ENCODE measurements at regions of chr4 and their contacts with region 1.

Region 1: GRCh38 chr4:83259586-83259985 is 25.0 kb downstream of the COQ2 start:
- DNase-seq: no peak
- ATAC-seq: no peak
- H3K4me3 ChIP-seq: no peak overlapping the region
- H3K4me3 Mint-ChIP-seq: no peak overlapping the region
- H3K27ac ChIP-seq: no peak overlapping the region
- H3K27ac Mint-ChIP-seq: no peak overlapping the region
- H3K4me1 ChIP-seq: peaks cover 5% of the 10 kb centered on the region
- H3K4me1 Mint-ChIP-seq: peaks cover 6% of the 10 kb centered on the region
- H3K27me3 ChIP-seq: no peaks in the 10 kb centered on the region
- H3K27me3 Mint-ChIP-seq: no peaks in the 10 kb centered on the region
- CTCF ChIP-seq: no peak

Region 2: DNA sequence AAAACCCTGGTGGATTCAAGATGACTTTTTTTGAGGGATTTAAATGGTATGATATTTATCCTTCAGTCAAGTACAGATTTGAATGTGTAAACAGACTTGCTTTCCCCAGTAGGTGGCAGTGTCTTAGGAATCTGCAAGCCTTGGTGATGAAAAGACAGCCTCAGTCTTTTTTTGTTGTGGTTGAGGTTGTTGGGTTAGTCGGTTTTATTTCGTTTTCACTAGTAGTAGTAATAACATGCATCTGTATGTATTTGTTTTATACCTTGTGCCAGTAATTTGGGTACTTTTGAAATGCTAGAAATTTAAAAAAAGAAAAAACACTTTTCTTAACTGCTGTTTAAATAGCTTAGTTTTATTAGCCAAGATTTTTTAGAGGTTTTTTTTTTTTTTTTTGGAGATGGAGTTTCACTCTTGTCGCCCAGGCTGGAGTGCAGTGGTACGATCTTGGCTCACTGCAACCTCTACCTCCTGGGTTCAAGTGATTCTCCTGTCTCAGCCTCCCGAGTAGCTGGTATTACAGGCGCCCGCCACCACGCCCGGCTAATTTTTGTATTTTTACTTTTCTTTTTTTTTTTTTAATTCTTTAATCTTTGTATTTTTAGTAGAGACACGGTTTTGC is 185.4 kb before region 1 on chr4:
- CTCF ChIA-PET with region 1: interaction called, 22 read pairs
- POLR2A ChIA-PET with region 1: interaction called, 15 read pairs
- intact Hi-C with region 1: loop called (anchors 1 kb)
- DNase-seq: peak in 9 of 14 experiments; percentile 26 to 93 (median 59)
- ATAC-seq: peak; percentile 95
- H3K4me3 ChIP-seq: peak overlapping the region; percentile 13
- H3K4me3 Mint-ChIP-seq: peak overlapping the region; percentile 68
- H3K27ac ChIP-seq: no peak overlapping the region
- H3K27ac Mint-ChIP-seq: peak overlapping the region; percentile 69
- H3K4me1 ChIP-seq: peaks cover 8% of the 10 kb centered on the region
- H3K4me1 Mint-ChIP-seq: peaks cover 13% of the 10 kb centered on the region
- H3K27me3 ChIP-seq: no peaks in the 10 kb centered on the region
- H3K27me3 Mint-ChIP-seq: no peaks in the 10 kb centered on the region
- CTCF ChIP-seq: peak; percentile 77

Region 3: DNA sequence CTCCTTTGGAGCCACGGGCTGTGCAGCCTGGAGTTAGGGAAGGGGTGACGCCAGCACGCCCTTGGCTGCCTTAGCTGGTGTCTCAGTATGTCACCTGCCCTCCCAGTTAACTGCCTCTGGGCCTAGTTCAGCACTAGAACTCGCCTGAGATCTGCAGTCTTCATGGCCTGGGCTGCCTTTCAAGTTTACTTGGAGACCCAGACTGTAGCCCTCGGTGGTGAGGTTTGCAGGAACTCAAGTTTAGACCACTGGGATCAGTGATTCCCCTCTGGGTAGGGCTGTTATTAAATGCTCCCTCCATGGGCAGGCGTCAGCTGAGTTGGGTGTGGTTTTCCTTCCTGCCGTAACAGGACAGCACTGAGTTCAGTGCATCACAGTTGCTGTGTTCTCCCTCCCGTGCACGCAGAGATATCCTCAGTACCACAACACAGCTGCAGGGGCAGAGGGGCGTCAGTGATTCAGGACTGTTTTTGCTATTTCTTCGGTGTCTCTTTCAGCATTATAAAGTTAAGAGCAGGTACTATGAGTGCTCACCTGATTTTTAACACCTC is 175.6 kb before region 1 on chr4:
- CTCF ChIA-PET with region 1: interaction called, 11 read pairs
- POLR2A ChIA-PET with region 1: interaction called, 13 read pairs
- intact Hi-C with region 1: no loop called
- DNase-seq: peak in 12 of 14 experiments; percentile 28 to 90 (median 66)
- ATAC-seq: peak; percentile 98
- H3K4me3 ChIP-seq: no peak overlapping the region
- H3K4me3 Mint-ChIP-seq: peak overlapping the region; percentile 60
- H3K27ac ChIP-seq: peak overlapping the region; percentile 22 to 69
- H3K27ac Mint-ChIP-seq: peak overlapping the region; percentile 99
- H3K4me1 ChIP-seq: peaks cover 28% of the 10 kb centered on the region
- H3K4me1 Mint-ChIP-seq: peaks cover 57% of the 10 kb centered on the region
- H3K27me3 ChIP-seq: no peaks in the 10 kb centered on the region
- H3K27me3 Mint-ChIP-seq: no peaks in the 10 kb centered on the region
- CTCF ChIP-seq: peak; percentile 53

Region 4: GRCh38 chr4:83146841-83147240 is 112.7 kb before region 1 on chr4:
- CTCF ChIA-PET with region 1: no interaction called
- POLR2A ChIA-PET with region 1: no interaction called
- intact Hi-C with region 1: no loop called
- DNase-seq: no peak
- ATAC-seq: no peak
- H3K4me3 ChIP-seq: no peak overlapping the region
- H3K4me3 Mint-ChIP-seq: no peak overlapping the region
- H3K27ac ChIP-seq: no peak overlapping the region
- H3K27ac Mint-ChIP-seq: no peak overlapping the region
- H3K4me1 ChIP-seq: no peaks in the 10 kb centered on the region
- H3K4me1 Mint-ChIP-seq: no peaks in the 10 kb centered on the region
- H3K27me3 ChIP-seq: no peaks in the 10 kb centered on the region
- H3K27me3 Mint-ChIP-seq: no peaks in the 10 kb centered on the region
- CTCF ChIP-seq: no peak

Measured in CD4-positive, alpha-beta T cell (primary cell).